GM10248 (cell line): ENCODE measurements at regions of chr5 and their contacts with region 1.

Region 1: DNA sequence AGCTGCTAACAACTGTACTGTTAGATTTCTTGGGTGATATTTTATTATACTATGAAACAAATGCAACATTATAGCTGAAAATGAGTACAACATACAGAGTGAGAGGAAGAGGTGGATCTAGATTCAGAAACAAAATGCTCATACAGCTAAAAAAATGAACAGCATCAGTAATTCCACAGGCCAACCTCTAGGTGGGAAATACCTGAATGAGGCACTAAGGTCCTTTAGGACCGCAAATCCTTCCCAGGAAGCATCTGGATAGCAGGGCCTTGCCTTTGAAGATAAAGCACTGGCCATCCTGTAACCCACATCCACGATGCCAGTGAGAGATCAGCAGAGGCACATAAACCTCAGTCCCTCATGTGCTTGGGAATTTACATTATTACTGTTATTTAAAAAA is 310.8 kb downstream of the YTHDC2 start:
- DNase-seq: no peak
- CTCF ChIP-seq: no peak

Region 2: DNA sequence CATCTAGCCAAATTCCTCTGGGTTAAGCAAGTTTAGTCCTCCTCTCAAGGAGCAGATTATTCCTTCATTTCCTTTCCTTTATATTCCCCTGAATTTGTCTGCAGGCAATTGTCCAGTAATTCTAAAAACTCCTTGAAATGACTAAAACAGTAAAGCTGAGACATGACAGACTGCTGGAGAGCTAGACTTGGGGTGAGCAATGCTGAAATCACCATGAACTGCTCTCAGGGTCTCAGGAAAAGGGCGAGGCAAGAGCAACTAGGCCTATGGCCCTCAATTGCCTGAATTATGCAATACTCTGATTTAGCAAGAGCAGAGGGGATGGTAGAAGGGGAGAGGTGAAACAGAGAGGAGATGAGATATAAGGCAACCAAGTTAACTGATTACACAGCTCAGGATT is 1894.4 kb before region 1 on chr5:
- CTCF ChIA-PET with region 1: no interaction called
- POLR2A ChIA-PET with region 1: no interaction called
- DNase-seq: no peak
- CTCF ChIP-seq: no peak

Region 3: GRCh38 chr5:113806250-113806649 is 18.1 kb before region 1 on chr5:
- CTCF ChIA-PET with region 1: interaction called, 18 read pairs
- POLR2A ChIA-PET with region 1: no interaction called
- DNase-seq: no peak
- CTCF ChIP-seq: no peak

Region 4: GRCh38 chr5:114362197-114362976 is 538.1 kb after region 1 on chr5:
- CTCF ChIA-PET with region 1: no interaction called
- POLR2A ChIA-PET with region 1: no interaction called
- DNase-seq: peak; percentile 14
- CTCF ChIP-seq: no peak